RWPE1 (cell line): ENCODE measurements at regions of chr12 and their contacts with region 1.

Region 1: DNA sequence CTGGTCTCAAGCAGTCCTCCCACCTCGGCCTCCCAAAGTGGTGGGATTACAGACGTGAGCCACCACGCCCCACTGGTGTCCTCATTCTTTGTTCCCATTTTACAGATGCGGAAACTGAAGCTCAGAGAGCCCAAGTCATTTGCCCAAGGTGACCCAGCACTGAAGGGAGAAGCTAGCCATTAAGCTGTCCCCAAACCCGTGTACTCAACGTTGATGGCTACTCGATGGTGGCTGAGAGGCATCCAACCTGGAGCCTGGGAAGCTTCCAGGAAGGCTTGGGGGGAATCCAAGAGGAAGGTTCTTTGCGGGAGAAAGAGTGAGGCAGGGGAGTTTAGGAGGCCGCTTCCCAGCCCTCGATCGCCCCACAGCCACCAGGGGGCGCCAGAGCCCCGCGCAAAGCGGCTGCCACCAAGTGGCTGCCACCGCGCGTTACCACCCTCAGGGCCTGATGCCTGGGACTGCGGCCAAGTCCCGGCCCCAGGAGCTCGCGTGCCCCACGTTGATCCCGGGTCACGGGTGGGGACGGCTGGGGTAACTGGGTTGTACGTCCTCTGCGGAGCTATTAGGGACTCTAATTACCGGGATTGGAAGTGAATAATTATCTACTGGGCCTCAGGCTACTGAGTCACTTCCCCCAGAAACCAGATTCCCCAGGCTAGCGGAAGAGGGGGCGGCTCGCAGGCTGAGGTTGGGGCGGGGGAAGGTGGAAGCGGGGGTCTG is 8.8 kb upstream of the SH2B3 start:
- DNase-seq: peak; percentile 93
- H3K27ac ChIP-seq: peak overlapping the region; percentile 77
- CTCF ChIP-seq: peak; percentile 97

Region 2: GRCh38 chr12:111368788-111369495 is 27.9 kb before region 1 on chr12 and contains the start of gene PHETA1:
- CTCF ChIA-PET with region 1: interaction called, 18 read pairs
- POLR2A ChIA-PET with region 1: no interaction called
- DNase-seq: peak; percentile 91
- H3K27ac ChIP-seq: peak within 1 kb of the TSS; percentile 58
- CTCF ChIP-seq: no peak

Region 3: GRCh38 chr12:111434680-111435338 is 37.9 kb after region 1 on chr12:
- CTCF ChIA-PET with region 1: interaction called, 10 read pairs
- POLR2A ChIA-PET with region 1: no interaction called
- DNase-seq: no peak
- H3K27ac ChIP-seq: peak overlapping the region; percentile 90
- CTCF ChIP-seq: no peak

Region 4: DNA sequence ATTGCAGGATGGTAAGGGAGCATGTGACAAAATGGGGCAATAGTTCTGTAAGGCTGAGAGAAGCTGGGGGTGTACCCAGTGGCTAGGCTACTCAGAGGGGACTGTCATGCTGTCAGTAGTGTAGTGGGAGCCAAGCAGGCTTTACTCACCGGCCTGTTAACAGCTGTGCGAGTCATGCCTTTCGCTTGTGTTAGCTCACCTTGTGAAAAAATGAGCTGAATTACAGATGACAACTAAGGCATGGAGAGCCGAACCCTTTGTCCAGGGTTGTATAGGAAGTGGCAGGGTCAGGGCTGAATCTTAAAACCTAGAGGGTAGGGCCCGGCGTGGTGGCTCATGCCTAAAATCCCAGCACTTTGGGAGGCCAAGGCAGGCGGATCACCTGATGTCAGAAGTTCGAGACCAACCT is 46.7 kb after region 1 on chr12:
- CTCF ChIA-PET with region 1: interaction called, 16 read pairs
- POLR2A ChIA-PET with region 1: no interaction called
- DNase-seq: no peak
- H3K27ac ChIP-seq: peak overlapping the region; percentile 75
- CTCF ChIP-seq: no peak